Activated CD8-positive, alpha-beta T cell treated with anti-CD3 and anti-CD28 coated beads, Interleukin-2, amount 10 ng/mL, durations not matched to agents 7 days and 5 days (primary cell): ENCODE measurements at regions of chr6 and their contacts with region 1.

Region 1: GRCh38 chr6:137975188-137975940 is 108.3 kb downstream of the TNFAIP3 start:
- DNase-seq: peak; percentile 59
- ATAC-seq: peak; percentile 86
- H3K4me3 Mint-ChIP-seq: peak overlapping the region; percentile 76
- H3K27ac Mint-ChIP-seq: peak overlapping the region; percentile 92
- H3K4me1 Mint-ChIP-seq: peaks cover 51% of the 10 kb centered on the region
- H3K27me3 Mint-ChIP-seq: no peaks in the 10 kb centered on the region

Region 2: DNA sequence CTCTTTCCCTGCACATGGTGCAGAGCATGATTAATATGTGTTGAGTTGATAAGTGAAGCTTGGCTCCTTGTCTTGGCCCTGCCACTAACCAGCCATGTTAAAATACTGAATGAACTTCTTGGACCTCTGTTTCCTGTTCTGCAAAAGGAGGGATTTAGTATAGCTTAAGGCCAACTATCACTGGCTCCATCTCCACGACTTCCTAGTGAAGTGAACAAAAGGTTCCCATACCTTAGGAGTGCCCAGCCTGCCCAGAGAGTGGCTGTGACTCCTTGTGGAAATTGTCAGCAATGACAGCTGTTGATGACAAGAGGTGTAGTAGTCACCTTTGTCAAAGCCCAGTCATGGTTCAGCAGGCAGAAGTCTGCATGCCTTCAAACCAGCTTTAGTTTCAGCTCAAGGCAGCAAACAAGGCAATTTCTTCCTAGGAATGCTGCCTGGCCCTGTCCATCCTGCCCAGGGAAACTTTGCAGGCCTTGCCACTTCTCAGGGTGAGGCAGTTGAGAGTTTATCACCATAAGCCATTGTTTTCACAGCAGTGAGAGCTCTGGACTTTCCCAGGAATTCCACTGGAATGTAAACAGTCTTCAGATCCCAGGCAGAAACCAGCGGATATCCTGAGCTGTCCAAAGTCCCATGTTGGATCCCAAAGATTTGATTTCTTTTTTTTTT is 278.0 kb before region 1 on chr6:
- CTCF ChIA-PET with region 1: interaction called, 29 read pairs
- POLR2A ChIA-PET with region 1: no interaction called
- DNase-seq: no peak
- ATAC-seq: peak; percentile 17
- H3K4me3 Mint-ChIP-seq: no peak overlapping the region
- H3K27ac Mint-ChIP-seq: no peak overlapping the region
- H3K4me1 Mint-ChIP-seq: peaks cover 38% of the 10 kb centered on the region
- H3K27me3 Mint-ChIP-seq: peaks cover 5% of the 10 kb centered on the region

Region 3: DNA sequence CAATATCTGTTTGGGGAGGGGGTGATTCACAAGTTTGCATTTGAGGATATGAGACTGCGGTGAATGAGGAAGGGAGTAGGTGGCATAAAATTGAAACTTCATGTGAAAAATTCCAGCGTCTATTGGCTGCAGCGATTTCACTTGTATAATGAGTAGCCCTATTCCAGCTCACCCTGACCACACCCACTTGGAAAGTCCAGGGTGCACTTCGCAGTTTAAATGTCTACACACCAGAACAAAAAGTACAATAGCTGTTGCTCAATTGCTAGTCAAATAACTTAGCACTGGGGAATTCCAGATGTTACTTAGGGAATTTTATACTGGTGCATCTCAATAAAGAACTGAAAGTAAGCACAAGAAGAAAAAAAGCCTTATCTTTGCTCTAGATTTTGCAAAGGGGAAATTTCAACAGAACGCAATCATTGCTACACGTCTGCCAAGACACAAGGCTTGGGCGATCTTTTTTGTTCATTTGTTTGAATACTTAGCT is 102.0 kb before region 1 on chr6:
- CTCF ChIA-PET with region 1: interaction called, 191 read pairs
- POLR2A ChIA-PET with region 1: interaction called, 10 read pairs
- DNase-seq: peak; percentile 44
- ATAC-seq: no peak
- H3K4me3 Mint-ChIP-seq: peak overlapping the region; percentile 94
- H3K27ac Mint-ChIP-seq: peak overlapping the region; percentile 42
- H3K4me1 Mint-ChIP-seq: peaks cover 83% of the 10 kb centered on the region
- H3K27me3 Mint-ChIP-seq: no peaks in the 10 kb centered on the region

Region 4: GRCh38 chr6:137938770-137939379 is 36.5 kb before region 1 on chr6:
- CTCF ChIA-PET with region 1: interaction called, 68 read pairs
- POLR2A ChIA-PET with region 1: no interaction called
- DNase-seq: no peak
- ATAC-seq: no peak
- H3K4me3 Mint-ChIP-seq: no peak overlapping the region
- H3K27ac Mint-ChIP-seq: no peak overlapping the region
- H3K4me1 Mint-ChIP-seq: peaks cover 18% of the 10 kb centered on the region
- H3K27me3 Mint-ChIP-seq: no peaks in the 10 kb centered on the region

Region 5: GRCh38 chr6:138092686-138093085 is 117.3 kb after region 1 on chr6:
- CTCF ChIA-PET with region 1: no interaction called
- POLR2A ChIA-PET with region 1: no interaction called
- DNase-seq: no peak
- ATAC-seq: no peak
- H3K4me3 Mint-ChIP-seq: no peak overlapping the region
- H3K27ac Mint-ChIP-seq: no peak overlapping the region
- H3K4me1 Mint-ChIP-seq: no peaks in the 10 kb centered on the region
- H3K27me3 Mint-ChIP-seq: peaks cover 17% of the 10 kb centered on the region